Right ventricle myocardium inferior (tissue), 1 donor: ENCODE measurements at regions of chr9 and their contacts with region 1.

Region 1: GRCh38 chr9:72025931-72026342 is 34.5 kb downstream of the C9orf57 start:
- DNase-seq: no peak
- ATAC-seq: no peak

Region 2: GRCh38 chr9:71384352-71384751 is 641.6 kb before region 1 on chr9:
- intact Hi-C with region 1: no loop called
- DNase-seq: no peak
- ATAC-seq: no peak

Region 3: GRCh38 chr9:71806901-71807307 is 219.0 kb before region 1 on chr9:
- intact Hi-C with region 1: loop called (anchors 1 kb)
- DNase-seq: no peak
- ATAC-seq: peak; percentile 97

Region 4: DNA sequence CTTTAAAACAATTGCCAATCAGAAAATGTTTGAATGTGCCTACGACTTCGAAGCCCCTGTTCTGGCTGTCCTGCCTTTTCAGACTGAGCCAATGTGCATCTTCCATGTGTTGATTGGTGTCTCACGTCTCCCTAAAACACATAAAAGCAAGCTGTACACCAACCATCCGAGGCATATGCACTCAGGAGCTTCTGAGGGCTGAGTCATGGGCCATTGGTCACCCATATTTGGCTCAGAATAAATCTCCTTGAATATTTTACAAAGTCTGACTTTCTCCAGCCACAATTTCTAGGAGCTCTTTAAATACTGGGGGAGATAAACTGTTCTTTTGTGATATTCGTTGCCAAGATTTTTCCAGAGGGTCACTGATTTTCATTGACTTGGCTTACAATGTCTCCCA is 19.4 kb before region 1 on chr9:
- intact Hi-C with region 1: no loop called
- DNase-seq: no peak
- ATAC-seq: no peak